Naive thymus-derived CD4-positive, alpha-beta T cell (primary cell): ENCODE measurements at regions of chr10 and their contacts with region 1.

Region 1: GRCh38 chr10:75111367-75111906 is at the start of gene SAMD8:
- DNase-seq: peak; percentile 90 to 98 (median 94)
- ATAC-seq: peak; percentile 92
- H3K4me3 ChIP-seq: peak within 1 kb of the TSS; percentile 90
- H3K4me3 Mint-ChIP-seq: peak within 1 kb of the TSS; percentile 81 to 98 (median 90)
- H3K27ac ChIP-seq: peak within 1 kb of the TSS; percentile 89
- H3K27ac Mint-ChIP-seq: peak within 1 kb of the TSS; percentile 86 to 98 (median 94)
- H3K4me1 ChIP-seq: peaks cover 14 to 16% of the 10 kb centered on the region in 2 donors
- H3K4me1 Mint-ChIP-seq: peaks cover 33 to 66% (median 62%) of the 10 kb centered on the region in 7 donors
- H3K27me3 ChIP-seq: no peaks in the 10 kb centered on the region
- H3K27me3 Mint-ChIP-seq: no peaks in the 10 kb centered on the region
- total RNA-seq, gene SAMD8: 14.8 to 31.7 (median 17.5) TPM

Region 2: DNA sequence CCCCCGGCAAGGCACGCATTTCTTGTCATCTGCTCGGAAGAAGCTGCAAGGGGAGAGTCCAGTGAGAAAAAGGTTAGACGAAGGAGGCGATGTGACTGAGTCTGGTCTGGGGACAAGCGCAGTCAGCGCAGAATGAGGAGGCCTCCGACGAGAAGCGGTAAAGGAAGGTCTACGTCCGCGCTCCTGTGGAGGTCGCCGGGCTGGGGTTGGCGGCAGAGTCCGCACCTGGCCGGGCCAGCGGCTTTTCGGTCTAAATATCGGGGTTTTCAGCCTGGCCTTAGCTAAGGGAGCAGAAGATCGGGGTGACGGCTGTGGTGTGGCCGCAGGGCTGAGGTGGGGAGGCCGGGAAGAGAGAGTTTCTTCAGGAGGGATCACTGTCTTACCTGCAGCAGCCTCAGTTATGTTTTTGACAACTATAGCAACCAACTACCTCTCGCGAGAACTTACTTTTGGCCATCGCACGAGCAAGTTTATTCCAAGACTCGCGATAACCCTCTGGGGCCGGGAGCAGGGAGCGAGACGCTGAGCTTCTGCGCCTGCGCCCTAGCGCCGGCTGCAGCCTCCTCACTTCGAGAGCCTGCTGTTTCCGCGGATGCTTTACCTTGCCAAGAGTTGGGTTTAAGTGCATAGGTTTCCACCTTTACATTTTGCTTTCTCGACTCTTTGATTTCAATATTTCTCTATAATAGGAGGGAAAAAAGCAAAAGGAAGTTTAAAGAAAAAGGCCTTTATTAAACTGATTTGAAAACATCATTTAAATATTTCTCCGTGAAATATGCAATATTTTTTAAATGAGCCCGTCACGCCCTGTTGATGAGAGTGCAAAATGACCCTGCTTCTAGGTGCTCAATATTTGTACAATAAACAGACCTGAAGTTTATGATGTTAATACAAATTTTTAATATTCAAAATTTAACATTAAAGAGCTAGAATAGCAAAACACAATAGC is 1752.8 kb before region 1 on chr10 and contains the start of gene CFAP70:
- CTCF ChIA-PET with region 1: no interaction called
- POLR2A ChIA-PET with region 1: no interaction called
- intact Hi-C with region 1: loop called in 1 of 2 experiments (anchors 5 kb)
- DNase-seq: peak; percentile 79 to 97 (median 95)
- ATAC-seq: peak; percentile 97
- H3K4me3 ChIP-seq: peak within 1 kb of the TSS; percentile 70
- H3K4me3 Mint-ChIP-seq: peak within 1 kb of the TSS; percentile 91 to 99 (median 94)
- H3K27ac ChIP-seq: peak within 1 kb of the TSS; percentile 85
- H3K27ac Mint-ChIP-seq: peak within 1 kb of the TSS; percentile 92 to 99 (median 97)
- H3K4me1 ChIP-seq: peaks cover 4 to 5% of the 10 kb centered on the region in 2 donors
- H3K4me1 Mint-ChIP-seq: peaks cover 11 to 20% (median 18%) of the 10 kb centered on the region in 7 donors
- H3K27me3 ChIP-seq: no peaks in the 10 kb centered on the region
- H3K27me3 Mint-ChIP-seq: peaks cover 0 to 23% (median 0%) of the 10 kb centered on the region in 5 donors
- total RNA-seq, gene CFAP70: 0.80 to 5.4 (median 4.6) TPM

Region 3: DNA sequence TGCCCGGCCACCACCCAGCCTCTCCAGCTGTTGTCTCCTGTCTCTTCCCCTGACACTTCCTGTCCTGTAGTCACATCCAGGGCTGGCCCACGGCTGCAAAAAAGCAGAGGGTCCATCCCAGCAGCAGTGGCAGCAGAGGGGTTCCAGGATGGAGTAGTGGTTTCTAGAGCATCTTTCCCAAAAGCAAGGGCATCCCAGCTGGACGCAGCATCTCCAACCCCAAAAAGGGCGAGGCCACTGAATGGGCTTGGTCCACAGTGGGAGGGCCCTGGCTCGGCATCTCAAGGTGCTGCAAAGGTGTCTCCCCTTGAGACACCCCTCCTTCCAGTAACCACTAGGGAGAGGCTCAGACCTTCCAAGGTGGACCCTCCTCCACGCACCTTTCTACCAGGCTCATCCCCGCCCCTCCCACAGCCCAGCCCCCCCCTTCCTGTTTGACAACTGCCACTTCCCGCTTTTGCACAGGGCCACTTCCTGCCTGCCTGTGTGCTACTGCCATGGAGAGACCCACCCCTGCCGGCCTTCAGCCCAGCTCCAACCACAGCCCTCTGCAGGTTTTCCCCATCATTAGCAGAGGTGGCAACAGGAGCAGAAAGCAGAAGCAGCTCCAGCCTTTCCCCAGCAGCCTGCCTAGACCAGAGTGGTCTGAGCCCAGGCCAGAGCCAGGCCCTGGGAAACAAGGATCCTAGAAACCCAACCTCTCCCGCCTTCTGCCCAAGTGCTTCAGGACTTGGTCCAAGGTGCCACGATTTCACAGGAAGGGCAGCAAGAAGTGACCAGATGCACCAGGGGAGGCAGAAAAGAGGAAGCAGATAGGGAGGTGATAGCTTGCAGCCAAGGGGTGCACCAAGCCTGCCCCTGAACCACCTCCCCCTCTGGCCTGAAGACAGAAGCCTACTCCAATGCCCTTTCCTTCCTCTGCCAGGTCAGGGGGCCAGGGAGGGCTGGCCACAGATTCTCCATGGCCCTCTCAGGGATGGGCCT is 1245.7 kb before region 1 on chr10:
- CTCF ChIA-PET with region 1: no interaction called
- POLR2A ChIA-PET with region 1: no interaction called
- intact Hi-C with region 1: loop called in 1 of 2 experiments (anchors 5 kb)
- DNase-seq: peak; percentile 18 to 50 (median 47)
- ATAC-seq: peak; percentile 90
- H3K4me3 ChIP-seq: peak overlapping the region; percentile 60
- H3K4me3 Mint-ChIP-seq: peak overlapping the region; percentile 79 to 92 (median 87)
- H3K27ac ChIP-seq: peak overlapping the region; percentile 67
- H3K27ac Mint-ChIP-seq: peak overlapping the region; percentile 88 to 97 (median 96)
- H3K4me1 ChIP-seq: peaks cover 28 to 72% of the 10 kb centered on the region in 2 donors
- H3K4me1 Mint-ChIP-seq: peaks cover 56 to 92% (median 88%) of the 10 kb centered on the region in 7 donors
- H3K27me3 ChIP-seq: no peaks in the 10 kb centered on the region
- H3K27me3 Mint-ChIP-seq: no peaks in the 10 kb centered on the region

Region 4: DNA sequence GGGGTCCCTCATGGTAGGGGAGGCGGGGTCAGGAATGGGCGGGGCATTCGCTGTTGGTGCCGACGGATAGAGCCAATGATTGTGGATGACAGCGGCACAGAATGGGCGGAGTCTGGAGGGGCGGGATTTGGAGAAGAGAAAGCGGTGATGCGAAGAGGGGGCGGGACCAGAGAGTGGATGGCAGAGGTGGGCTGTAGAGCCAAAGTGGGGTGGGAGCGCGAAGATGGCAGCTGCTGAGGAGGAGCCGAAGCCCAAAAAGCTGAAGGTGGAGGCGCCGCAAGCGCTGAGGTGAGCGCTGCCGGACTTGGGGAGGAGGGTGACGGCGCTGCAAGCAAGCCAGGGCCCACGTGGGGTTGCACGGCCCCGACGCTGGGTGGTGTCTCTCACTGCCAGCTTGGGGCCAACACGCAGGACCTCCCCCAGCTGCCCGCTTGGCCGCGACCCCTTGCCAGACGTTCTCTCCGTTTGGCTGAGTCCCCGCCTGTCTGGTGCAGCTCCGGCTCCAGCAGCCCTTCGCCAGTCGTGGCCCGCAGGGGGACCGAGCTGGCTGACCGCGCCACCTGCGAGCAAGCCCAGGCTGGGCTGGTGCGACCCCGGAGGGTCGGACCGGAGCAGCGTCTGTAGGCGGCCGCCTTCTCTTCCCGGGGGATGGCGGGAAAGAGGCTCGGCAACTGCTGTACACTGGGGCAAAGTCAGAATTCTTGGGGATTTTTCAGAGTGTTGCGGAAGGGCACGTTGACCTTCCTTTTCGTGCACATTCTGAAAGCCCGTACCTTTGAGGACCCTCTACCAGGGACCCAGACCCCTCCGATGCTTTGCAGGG is 960.2 kb before region 1 on chr10 and contains the start of gene ADK:
- CTCF ChIA-PET with region 1: no interaction called
- POLR2A ChIA-PET with region 1: interaction called, 9 read pairs
- intact Hi-C with region 1: loop called (anchors 1 kb)
- DNase-seq: peak in 8 of 9 donors; percentile 96 to 100 (median 99)
- ATAC-seq: peak; percentile 99
- H3K4me3 ChIP-seq: peak within 1 kb of the TSS; percentile 90
- H3K4me3 Mint-ChIP-seq: no peak within 1 kb of the TSS
- H3K27ac ChIP-seq: peak within 1 kb of the TSS; percentile 84
- H3K27ac Mint-ChIP-seq: peak within 1 kb of the TSS in 5 of 9 donors; percentile 8 to 78 (median 47)
- H3K4me1 ChIP-seq: peaks cover 17 to 23% of the 10 kb centered on the region in 2 donors
- H3K4me1 Mint-ChIP-seq: peaks cover 36 to 56% (median 47%) of the 10 kb centered on the region in 7 donors
- H3K27me3 ChIP-seq: no peaks in the 10 kb centered on the region
- H3K27me3 Mint-ChIP-seq: no peaks in the 10 kb centered on the region
- total RNA-seq, gene ADK: 20.7 to 32.6 (median 25.0) TPM

Region 5: DNA sequence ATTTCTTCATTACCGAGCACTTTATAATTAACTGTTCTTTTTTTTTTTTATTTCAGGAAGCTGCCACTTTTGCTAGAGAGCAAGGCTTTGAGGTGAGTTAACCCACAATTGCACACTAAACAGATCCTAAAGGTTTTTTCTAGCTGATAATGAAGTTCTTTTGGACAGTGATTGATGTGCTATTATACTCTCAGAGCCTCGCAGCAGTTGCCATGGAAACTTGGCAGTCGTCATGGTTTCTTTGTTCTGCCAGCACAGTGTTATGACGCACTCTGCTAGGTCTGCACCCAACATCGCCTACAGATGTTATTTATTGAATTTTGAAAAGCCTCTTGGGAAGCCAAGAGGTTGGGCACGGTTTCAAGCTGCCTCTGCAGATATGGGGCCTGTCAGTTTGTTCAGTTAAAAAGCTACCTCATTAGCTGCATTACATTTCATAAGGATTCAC is 522.2 kb before region 1 on chr10:
- CTCF ChIA-PET with region 1: no interaction called
- POLR2A ChIA-PET with region 1: no interaction called
- intact Hi-C with region 1: loop called (anchors 5 kb)
- DNase-seq: peak; percentile 41 to 97 (median 92)
- ATAC-seq: peak; percentile 88
- H3K4me3 ChIP-seq: no peak overlapping the region
- H3K4me3 Mint-ChIP-seq: peak overlapping the region in 8 of 10 donors; percentile 6 to 75 (median 60)
- H3K27ac ChIP-seq: peak overlapping the region; percentile 69
- H3K27ac Mint-ChIP-seq: peak overlapping the region; percentile 70 to 97 (median 93)
- H3K4me1 ChIP-seq: peaks cover 37 to 42% of the 10 kb centered on the region in 2 donors
- H3K4me1 Mint-ChIP-seq: peaks cover 21 to 66% (median 59%) of the 10 kb centered on the region in 7 donors
- H3K27me3 ChIP-seq: no peaks in the 10 kb centered on the region
- H3K27me3 Mint-ChIP-seq: no peaks in the 10 kb centered on the region

Region 6: DNA sequence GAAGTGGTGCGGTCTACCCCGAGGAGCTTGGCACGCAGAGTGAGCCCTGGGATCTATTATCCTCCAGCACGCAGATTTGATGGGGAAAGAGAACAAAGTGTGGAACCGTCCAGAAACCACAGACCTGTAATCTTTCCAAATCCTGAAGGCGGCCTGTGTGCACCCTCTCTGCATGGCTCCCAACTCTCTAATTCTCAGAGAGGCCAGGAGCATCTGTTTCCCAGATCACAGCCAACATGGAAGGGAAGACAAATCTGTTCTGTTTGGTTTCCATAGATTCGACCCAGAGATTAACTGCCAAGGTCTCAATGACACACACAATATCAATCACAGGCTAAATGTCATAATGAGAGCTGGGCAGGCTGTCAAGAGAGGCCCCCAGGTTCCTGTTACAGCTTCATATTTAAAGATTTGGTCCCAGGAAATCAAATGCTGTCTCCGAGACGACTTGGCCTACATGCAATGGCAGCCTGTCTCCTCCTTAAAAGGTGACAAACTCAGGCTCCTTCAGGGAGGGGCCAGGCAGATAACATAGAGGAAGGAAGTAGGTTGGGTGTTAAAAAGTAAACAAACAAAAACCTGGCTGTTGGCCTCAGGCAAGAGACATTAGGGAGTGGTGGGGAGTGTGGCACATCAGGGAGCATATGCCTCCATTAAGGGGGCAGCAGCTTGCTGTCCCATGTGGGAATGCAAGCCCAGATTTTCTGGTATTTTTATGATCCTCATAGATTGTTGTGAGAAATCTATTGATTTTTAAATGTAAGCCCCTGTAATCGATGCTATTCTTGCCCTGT is 48.7 kb before region 1 on chr10:
- CTCF ChIA-PET with region 1: no interaction called
- POLR2A ChIA-PET with region 1: no interaction called
- intact Hi-C with region 1: no loop called
- DNase-seq: no peak
- ATAC-seq: no peak
- H3K4me3 ChIP-seq: no peak overlapping the region
- H3K4me3 Mint-ChIP-seq: no peak overlapping the region
- H3K27ac ChIP-seq: no peak overlapping the region
- H3K27ac Mint-ChIP-seq: peak overlapping the region in 1 of 9 donors; percentile 72
- H3K4me1 ChIP-seq: no peaks in the 10 kb centered on the region
- H3K4me1 Mint-ChIP-seq: no peaks in the 10 kb centered on the region
- H3K27me3 ChIP-seq: no peaks in the 10 kb centered on the region
- H3K27me3 Mint-ChIP-seq: no peaks in the 10 kb centered on the region

Region 7: GRCh38 chr10:75143353-75143752 is 31.9 kb after region 1 on chr10:
- CTCF ChIA-PET with region 1: no interaction called
- POLR2A ChIA-PET with region 1: no interaction called
- intact Hi-C with region 1: loop called in 1 of 2 experiments (anchors 5 kb)
- DNase-seq: no peak
- ATAC-seq: no peak
- H3K4me3 ChIP-seq: no peak overlapping the region
- H3K4me3 Mint-ChIP-seq: peak overlapping the region in 1 of 10 donors; percentile 38
- H3K27ac ChIP-seq: no peak overlapping the region
- H3K27ac Mint-ChIP-seq: peak overlapping the region in 6 of 9 donors; percentile 47 to 80 (median 65)
- H3K4me1 ChIP-seq: peaks cover 0 to 12% of the 10 kb centered on the region in 2 donors
- H3K4me1 Mint-ChIP-seq: peaks cover 28 to 77% (median 43%) of the 10 kb centered on the region in 7 donors
- H3K27me3 ChIP-seq: no peaks in the 10 kb centered on the region
- H3K27me3 Mint-ChIP-seq: no peaks in the 10 kb centered on the region

Region 8: DNA sequence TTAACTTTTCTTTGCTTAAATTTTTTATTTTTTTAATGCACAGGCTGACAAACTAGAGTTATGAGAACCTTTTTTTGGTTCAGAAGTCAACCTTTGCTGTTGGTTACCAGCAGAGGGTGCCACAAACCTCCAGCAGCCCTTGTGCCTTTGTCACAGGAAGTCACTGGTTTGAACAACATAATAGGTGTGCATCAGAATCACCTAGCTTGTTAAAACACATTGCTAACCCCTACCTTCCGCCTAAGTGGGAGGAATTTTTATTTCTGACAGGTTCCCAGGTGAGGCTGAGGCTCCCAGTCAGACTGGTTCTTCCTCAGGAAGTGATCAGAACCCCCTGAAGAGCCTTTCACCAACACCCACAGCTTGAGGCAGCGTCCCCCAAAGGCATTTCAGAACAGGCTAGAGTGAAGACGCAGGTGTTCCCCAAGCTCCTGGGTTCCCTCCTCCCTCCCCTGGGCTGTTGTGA is 76.6 kb after region 1 on chr10:
- CTCF ChIA-PET with region 1: interaction called, 4 read pairs
- POLR2A ChIA-PET with region 1: interaction called, 3 read pairs
- intact Hi-C with region 1: loop called (anchors 1 to 2 kb)
- DNase-seq: peak; percentile 33 to 84 (median 77)
- ATAC-seq: peak; percentile 94
- H3K4me3 ChIP-seq: no peak overlapping the region
- H3K4me3 Mint-ChIP-seq: peak overlapping the region in 1 of 10 donors; percentile 11
- H3K27ac ChIP-seq: peak overlapping the region; percentile 59
- H3K27ac Mint-ChIP-seq: peak overlapping the region; percentile 58 to 98 (median 90)
- H3K4me1 ChIP-seq: peaks cover 4 to 5% of the 10 kb centered on the region in 2 donors
- H3K4me1 Mint-ChIP-seq: peaks cover 0 to 12% (median 7%) of the 10 kb centered on the region in 7 donors
- H3K27me3 ChIP-seq: no peaks in the 10 kb centered on the region
- H3K27me3 Mint-ChIP-seq: no peaks in the 10 kb centered on the region

Region 9: DNA sequence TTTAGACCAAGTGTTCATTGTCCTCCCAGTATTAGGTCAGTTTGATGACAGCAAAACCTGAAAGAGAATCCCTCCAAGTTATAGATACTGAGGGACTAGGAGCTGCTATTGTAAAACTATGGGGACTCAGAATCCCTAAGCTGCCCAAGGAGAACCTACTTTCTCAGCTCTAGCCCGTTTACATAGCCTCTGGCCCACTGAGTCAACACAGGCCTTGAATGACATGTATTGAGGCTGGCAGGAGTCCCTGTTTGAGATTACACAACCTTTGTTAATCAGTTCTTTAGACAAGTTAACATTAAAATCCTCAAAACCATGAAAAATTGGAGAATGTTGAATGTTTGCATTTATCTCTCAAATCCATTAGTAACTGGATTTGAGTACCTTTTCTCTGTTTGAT is 1447.1 kb after region 1 on chr10:
- CTCF ChIA-PET with region 1: no interaction called
- POLR2A ChIA-PET with region 1: no interaction called
- intact Hi-C with region 1: no loop called
- DNase-seq: no peak
- ATAC-seq: no peak
- H3K4me3 ChIP-seq: no peak overlapping the region
- H3K4me3 Mint-ChIP-seq: no peak overlapping the region
- H3K27ac ChIP-seq: no peak overlapping the region
- H3K27ac Mint-ChIP-seq: no peak overlapping the region
- H3K4me1 ChIP-seq: no peaks in the 10 kb centered on the region
- H3K4me1 Mint-ChIP-seq: no peaks in the 10 kb centered on the region
- H3K27me3 ChIP-seq: no peaks in the 10 kb centered on the region
- H3K27me3 Mint-ChIP-seq: peaks cover 0 to 9% (median 0%) of the 10 kb centered on the region in 5 donors